Thyroid gland (tissue), 4 donors: ENCODE measurements at regions of chr9 and their contacts with region 1.

Region 1: DNA sequence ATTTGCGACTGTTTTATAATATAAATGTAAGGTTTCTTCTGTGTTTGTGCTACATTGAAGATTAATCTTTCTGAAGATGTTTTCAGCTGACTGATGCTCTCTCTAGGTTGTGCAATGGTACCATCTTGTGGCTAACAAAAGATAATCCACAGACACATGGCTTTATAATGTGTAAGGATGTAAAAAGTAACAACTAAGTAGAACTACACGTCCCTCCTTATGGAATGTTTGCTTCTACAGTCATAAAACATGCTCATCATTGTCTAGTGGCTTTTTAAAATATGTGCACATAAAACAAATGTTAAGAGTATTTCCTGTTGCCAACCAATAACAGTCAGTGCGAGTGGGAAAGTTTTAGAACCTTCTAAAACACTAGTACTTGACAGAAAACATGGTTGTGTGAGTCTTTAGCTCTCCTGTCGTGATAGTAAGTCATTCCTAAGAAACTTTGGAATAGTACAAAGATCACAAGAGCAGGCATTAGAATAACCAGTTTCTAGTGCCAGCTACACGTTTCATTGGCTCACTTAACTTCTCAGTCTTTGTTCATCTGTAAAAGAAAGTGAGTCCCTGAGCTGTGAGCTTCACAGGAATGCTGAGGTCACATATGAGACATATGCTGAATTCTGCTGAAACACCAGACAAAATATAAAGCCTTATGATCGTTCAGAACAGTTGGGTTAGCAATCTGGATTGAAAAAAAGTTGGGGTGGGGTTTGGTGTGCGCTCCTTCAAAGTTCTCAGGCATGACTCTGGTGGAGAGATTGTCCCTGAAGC is 75.7 kb upstream of the GLIS3 start:
- DNase-seq: no peak
- H3K4me3 ChIP-seq: no peak overlapping the region
- H3K27ac ChIP-seq: no peak overlapping the region
- H3K4me1 ChIP-seq: no peaks in the 10 kb centered on the region
- H3K27me3 ChIP-seq: no peaks in the 10 kb centered on the region
- CTCF ChIP-seq: peak in 4 of 6 experiments; percentile 45 to 70 (median 60)
- POLR2A ChIP-seq: no peak

Region 2: DNA sequence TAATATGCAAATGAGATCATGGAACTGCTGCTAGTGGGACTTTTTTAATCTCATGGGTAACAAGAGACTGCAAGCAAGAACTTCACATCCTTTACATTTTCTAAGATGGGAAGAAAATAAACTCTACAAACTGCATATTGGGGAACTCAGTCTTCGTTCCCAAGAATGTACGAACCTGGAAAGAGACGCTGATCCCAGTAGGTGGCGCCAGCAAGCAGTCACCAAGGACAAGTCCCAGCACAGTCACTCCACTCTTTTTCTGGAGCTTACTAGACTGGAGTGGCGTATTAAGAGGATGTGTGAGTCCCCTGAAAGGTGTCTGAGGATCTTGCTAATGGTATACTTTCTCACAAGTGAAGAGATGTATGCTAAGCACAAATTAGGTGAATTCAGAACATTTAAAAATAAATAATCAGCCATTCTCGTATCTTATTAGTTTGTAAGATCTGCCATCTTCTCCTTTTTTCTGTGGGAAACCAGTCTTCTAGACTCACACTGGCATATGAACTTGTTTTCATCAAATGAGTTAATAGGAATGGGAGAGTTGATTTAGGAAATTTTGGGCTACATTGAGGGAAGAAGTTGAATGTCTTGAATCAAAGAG is 1515.7 kb before region 1 on chr9:
- intact Hi-C with region 1: loop called (anchors 10 kb)
- DNase-seq: peak; percentile 59 to 70
- H3K4me3 ChIP-seq: no peak overlapping the region
- H3K27ac ChIP-seq: no peak overlapping the region
- H3K4me1 ChIP-seq: no peaks in the 10 kb centered on the region
- H3K27me3 ChIP-seq: no peaks in the 10 kb centered on the region
- CTCF ChIP-seq: peak in 5 of 6 experiments; percentile 23 to 74 (median 38)
- POLR2A ChIP-seq: no peak